A549 (cell line): ENCODE measurements at regions of chr15 and their contacts with region 1.

Region 1: GRCh38 chr15:76860201-76860600 is 44.9 kb downstream of the SCAPER start:
- DNase-seq: no peak
- ATAC-seq: no peak
- H3K4me3 ChIP-seq: no peak overlapping the region
- H3K27ac ChIP-seq: no peak overlapping the region
- H3K4me1 ChIP-seq: no peaks in the 10 kb centered on the region
- CTCF ChIP-seq: no peak
- EP300 ChIP-seq: no peak
- POLR2A ChIP-seq: no peak
- RAD21 ChIP-seq: no peak

Region 2: GRCh38 chr15:76840830-76841460 is 19.3 kb before region 1 on chr15:
- CTCF ChIA-PET with region 1: interaction called, 10 read pairs
- POLR2A ChIA-PET with region 1: no interaction called
- DNase-seq: peak; percentile 8 to 48
- ATAC-seq: peak; percentile 78
- H3K4me3 ChIP-seq: no peak overlapping the region
- H3K27ac ChIP-seq: no peak overlapping the region
- H3K4me1 ChIP-seq: no peaks in the 10 kb centered on the region
- CTCF ChIP-seq: peak; percentile 88
- EP300 ChIP-seq: no peak
- POLR2A ChIP-seq: no peak
- RAD21 ChIP-seq: peak; percentile 76 to 80